Sciatic nerve (tissue), 2 donors: ENCODE measurements at regions of chr2 and their contacts with region 1.

Region 1: GRCh38 chr2:205680067-205680466 is 2.2 kb upstream of the NRP2 start:
- DNase-seq: no peak
- ATAC-seq: peak; percentile 13

Region 2: DNA sequence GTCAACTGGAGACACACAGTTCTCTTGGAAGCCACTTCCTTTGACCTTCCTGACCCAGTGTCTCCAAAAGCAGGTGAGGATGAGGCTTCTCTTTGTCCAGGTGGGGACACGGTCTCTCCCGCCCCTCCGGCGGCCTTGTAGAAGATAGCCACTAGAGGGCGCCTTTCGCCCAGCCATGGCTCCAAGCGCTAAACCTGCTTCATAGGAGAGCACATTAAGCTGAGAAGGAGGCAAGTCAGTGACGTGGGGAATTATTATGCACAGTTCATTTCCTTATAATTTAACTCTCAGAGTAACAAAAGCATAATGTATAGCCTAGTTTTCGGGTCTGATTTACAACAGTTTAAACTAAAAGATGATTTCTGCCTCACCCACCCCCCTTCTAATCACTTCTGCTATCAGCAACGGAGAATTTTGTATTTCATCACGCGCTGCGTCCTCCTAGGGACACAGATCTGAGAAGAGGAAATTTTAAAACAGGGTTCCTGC is 1534.8 kb before region 1 on chr2:
- intact Hi-C with region 1: loop called (anchors 10 kb)
- DNase-seq: peak; percentile 86
- ATAC-seq: peak; percentile 98

Region 3: GRCh38 chr2:204332706-204333105 is 1347.4 kb before region 1 on chr2:
- intact Hi-C with region 1: loop called (anchors 5 kb)
- DNase-seq: no peak
- ATAC-seq: no peak

Region 4: GRCh38 chr2:205885492-205886099 is 205.5 kb after region 1 on chr2:
- intact Hi-C with region 1: loop called (anchors 10 kb)
- DNase-seq: peak; percentile 96
- ATAC-seq: peak; percentile 96